ENCODE measurements at regions of chr2 and their contacts with region 1.

Region 1: DNA sequence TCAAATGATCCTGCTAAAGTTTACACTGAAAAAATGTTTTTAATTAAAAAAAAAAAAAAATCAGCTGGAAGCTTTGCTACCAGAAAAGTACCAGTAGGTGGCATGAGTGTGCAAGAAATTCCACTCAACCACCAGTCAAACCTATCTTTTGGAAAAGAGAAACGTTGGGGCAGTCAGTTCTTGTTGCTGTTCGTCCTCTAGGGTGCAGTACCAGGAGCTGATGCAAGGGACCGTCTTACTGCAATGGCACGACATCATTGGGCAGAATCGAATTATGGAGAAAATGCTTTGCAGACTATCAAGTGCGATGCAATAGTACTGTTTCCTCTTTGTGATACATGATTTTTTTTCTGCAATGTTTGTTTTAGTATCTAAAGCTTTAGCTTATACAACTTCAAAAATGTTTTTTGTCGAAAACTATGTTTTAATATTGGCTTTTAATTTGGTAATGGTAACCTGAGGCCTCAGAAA is 18.3 kb downstream of the YPEL5 start:
- DNase-seq: peak; percentile 94 to 97 (median 97)
- H3K4me3 ChIP-seq: no peak overlapping the region
- H3K27ac ChIP-seq: no peak overlapping the region
- H3K4me1 ChIP-seq: peaks cover 0 to 14% (median 0%) of the 10 kb centered on the region in 4 experiments
- H3K27me3 ChIP-seq: peaks cover 0 to 2% (median 0%) of the 10 kb centered on the region in 5 experiments

Region 2: GRCh38 chr2:29723255-29724001 is 441.7 kb before region 1 on chr2:
- CTCF ChIA-PET with region 1: no interaction called
- POLR2A ChIA-PET with region 1: no interaction called
- DNase-seq: no peak
- H3K4me3 ChIP-seq: no peak overlapping the region
- H3K27ac ChIP-seq: no peak overlapping the region
- H3K4me1 ChIP-seq: no peaks in the 10 kb centered on the region
- H3K27me3 ChIP-seq: no peaks in the 10 kb centered on the region

Region 3: GRCh38 chr2:30146438-30147147 is 18.5 kb before region 1 on chr2 and contains the start of gene YPEL5:
- CTCF ChIA-PET with region 1: interaction called, 68 read pairs
- POLR2A ChIA-PET with region 1: interaction called, 4 read pairs
- DNase-seq: peak; percentile 100
- H3K4me3 ChIP-seq: peak within 1 kb of the TSS; percentile 65 to 89 (median 81)
- H3K27ac ChIP-seq: peak within 1 kb of the TSS; percentile 96
- H3K4me1 ChIP-seq: peaks cover 29 to 45% (median 40%) of the 10 kb centered on the region in 4 experiments
- H3K27me3 ChIP-seq: no peaks in the 10 kb centered on the region

Region 4: DNA sequence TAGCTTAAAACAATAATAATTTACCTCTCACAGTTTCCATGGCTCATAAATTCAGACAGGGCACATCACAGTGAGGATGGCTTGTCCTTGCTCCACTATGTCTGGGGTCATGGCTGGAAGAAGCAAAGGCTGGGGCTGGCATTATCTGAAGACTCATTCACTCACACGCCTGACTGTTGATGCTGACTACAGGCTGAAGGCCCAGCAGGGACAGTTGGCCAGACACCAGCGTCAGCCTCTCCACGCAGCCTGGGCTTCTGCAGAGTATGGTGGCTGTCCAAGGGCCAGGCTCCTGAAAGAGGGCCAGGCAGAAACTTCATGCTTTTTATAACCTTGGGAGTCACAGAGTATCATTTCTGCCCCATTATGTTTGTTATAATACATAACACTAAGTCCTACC is 15.1 kb after region 1 on chr2:
- CTCF ChIA-PET with region 1: interaction called, 14 read pairs
- POLR2A ChIA-PET with region 1: no interaction called
- DNase-seq: no peak
- H3K4me3 ChIP-seq: no peak overlapping the region
- H3K27ac ChIP-seq: no peak overlapping the region
- H3K4me1 ChIP-seq: peaks cover 0 to 2% (median 0%) of the 10 kb centered on the region in 4 experiments
- H3K27me3 ChIP-seq: no peaks in the 10 kb centered on the region

Region 5: DNA sequence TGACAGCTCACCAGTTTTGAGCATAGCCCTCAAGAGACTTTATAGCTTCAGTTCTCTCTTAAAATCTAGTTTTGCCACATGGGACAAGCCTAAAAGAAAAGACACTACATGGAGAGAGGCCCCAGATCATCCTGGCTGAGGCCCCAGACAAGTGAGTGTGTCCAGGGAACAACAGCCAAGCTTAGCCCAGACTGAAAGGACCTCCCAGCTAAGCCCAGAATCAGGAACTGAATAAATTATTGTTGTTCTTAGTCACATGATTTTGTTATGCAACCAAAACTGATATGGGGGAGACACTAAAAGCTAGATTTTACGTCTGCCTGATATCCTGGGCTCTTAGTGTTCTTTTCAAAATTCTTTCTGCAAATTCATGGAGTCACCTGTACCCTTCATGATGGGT is 36.9 kb after region 1 on chr2:
- CTCF ChIA-PET with region 1: interaction called, 11 read pairs
- POLR2A ChIA-PET with region 1: no interaction called
- DNase-seq: peak in 1 of 3 donors; percentile 32
- H3K4me3 ChIP-seq: no peak overlapping the region
- H3K27ac ChIP-seq: no peak overlapping the region
- H3K4me1 ChIP-seq: peaks cover 0 to 14% (median 6%) of the 10 kb centered on the region in 4 experiments
- H3K27me3 ChIP-seq: peaks cover 0 to 2% (median 0%) of the 10 kb centered on the region in 5 experiments

Region 6: DNA sequence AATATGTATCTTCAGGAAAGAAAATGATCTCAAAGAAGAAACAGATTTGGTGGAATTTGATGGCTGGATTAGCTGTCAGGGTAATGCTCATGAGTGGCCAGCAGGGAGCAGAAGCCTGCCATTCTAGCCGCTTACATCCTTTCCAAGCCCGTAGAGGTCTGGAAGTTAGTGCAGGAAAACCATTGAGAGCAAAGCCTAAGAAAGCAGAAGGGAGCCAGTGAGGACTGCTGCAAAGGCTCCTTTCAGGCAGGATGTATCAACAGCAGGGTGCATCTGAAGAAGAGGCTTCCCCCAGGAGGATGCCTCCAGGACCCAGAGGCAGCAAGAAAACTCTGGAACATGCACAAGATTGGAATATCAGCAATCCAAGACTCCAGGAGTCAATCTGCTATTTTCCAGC is 43.4 kb after region 1 on chr2:
- CTCF ChIA-PET with region 1: interaction called, 21 read pairs
- POLR2A ChIA-PET with region 1: no interaction called
- DNase-seq: peak; percentile 45 to 66 (median 57)
- H3K4me3 ChIP-seq: no peak overlapping the region
- H3K27ac ChIP-seq: no peak overlapping the region
- H3K4me1 ChIP-seq: peaks cover 0 to 3% (median 1%) of the 10 kb centered on the region in 4 experiments
- H3K27me3 ChIP-seq: peaks cover 0 to 2% (median 0%) of the 10 kb centered on the region in 5 experiments